Right ventricle myocardium superior (tissue), 1 donor: ENCODE measurements at regions of chr7 and their contacts with region 1.

Region 1: GRCh38 chr7:100803398-100804233 is 23.7 kb downstream of the EPHB4 start:
- DNase-seq: peak; percentile 76
- ATAC-seq: peak; percentile 92

Region 2: DNA sequence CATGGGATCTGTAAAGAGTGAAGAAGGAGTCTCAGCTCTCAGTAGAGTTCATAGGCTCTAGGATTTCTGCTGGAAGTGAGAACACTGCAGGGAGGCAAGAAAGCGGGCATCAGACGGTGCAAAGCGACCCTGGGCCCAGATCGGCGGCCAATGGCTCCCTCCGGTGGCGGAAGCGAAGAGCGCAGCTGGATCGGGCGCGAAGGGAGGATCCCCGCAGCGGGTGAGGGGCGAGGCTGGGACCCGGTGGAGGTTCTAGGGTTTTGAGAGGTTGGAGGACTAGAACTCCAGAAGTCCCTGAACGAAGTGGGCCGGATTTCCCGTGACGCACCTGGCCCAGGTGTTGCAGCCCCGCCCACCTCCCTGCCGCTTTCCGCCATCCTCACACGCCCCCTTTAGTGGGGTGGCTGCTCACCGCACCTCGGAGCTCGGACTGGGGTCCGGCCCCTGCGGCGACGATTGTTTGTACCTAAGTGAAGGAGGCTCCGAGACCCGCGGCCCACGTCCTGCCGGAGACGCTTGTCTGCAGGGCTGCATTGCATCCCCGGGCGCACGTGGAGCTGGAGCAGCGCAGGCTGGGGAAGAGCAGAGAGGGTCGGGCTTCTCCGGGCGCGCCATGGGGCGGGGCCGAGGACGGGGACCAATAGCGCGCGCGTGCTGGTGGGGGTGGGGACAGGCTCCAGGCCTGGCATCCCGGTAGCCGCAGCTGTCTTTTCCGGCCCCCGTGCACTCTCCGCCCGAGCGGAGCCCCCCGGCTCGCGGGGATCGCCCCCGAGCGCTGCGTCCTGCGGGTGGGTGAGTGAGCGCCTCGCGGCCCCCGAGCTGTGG is 48.6 kb after region 1 on chr7 and contains the start of gene SLC12A9:
- intact Hi-C with region 1: loop called (anchors 2 kb)
- DNase-seq: peak; percentile 95
- ATAC-seq: peak; percentile 99
- total RNA-seq, gene SLC12A9: 10.2 TPM